ENCODE measurements at regions of chr10 and their contacts with region 1.

Region 1: DNA sequence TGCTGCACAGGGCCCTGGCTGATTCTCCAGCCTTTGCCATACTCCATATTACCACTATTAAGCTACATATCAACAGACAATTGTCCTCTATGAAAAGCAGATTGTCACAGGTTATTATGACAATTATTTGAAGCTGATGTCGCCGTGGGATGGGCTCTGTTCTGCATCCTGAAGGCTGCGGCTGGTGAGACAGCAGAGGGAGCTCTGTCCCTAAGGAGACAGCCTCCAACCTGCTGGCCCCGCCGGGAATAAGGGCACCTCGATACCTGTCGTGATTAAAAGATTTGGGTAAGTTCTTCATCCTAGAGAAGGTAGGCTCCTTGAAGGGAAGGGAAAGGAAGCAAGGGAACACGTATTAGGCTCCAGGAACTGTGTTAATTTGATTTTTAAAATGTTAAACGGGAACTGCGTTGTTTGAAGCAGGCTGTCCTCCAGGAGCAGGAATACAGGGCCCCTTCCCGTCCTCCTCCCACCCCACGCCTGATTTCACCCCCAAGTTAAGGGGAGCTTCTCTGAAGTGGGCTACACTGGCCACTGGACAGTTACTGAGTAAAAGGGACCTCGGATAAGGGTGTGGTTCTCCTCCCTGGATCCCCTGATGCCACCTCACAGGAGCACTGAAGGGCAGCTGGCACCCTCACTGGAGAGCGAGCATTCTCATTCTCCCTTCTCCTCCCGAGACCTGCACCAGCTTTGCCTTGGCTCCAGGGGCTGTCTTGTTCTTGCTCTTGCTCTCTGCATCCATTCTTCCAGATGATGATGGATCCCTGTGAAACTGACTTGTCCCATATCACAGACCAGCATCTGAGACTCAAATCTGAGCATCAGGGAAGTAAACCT is 11.8 kb upstream of the TIAL1 start:
- DNase-seq: peak; percentile 66
- ATAC-seq: peak; percentile 88

Region 2: GRCh38 chr10:119859420-119860258 is 251.1 kb after region 1 on chr10:
- intact Hi-C with region 1: loop called (anchors 10 kb)
- DNase-seq: no peak
- ATAC-seq: no peak

Measured in left ventricle myocardium superior (tissue), 1 donor.